ENCODE measurements at regions of chr20 and their contacts with region 1.

Region 1: GRCh38 chr20:51541189-51542032 is 1.1 kb downstream of the NFATC2 start:
- DNase-seq: peak; percentile 90
- ATAC-seq: peak; percentile 84
- H3K4me3 Mint-ChIP-seq: peak overlapping the region; percentile 97
- H3K27ac Mint-ChIP-seq: peak overlapping the region; percentile 99
- H3K4me1 Mint-ChIP-seq: peaks cover 43% of the 10 kb centered on the region
- H3K27me3 Mint-ChIP-seq: peaks cover 8% of the 10 kb centered on the region

Region 2: GRCh38 chr20:51385646-51386530 is 155.5 kb before region 1 on chr20:
- CTCF ChIA-PET with region 1: interaction called, 6 read pairs
- POLR2A ChIA-PET with region 1: no interaction called
- intact Hi-C with region 1: loop called in 1 of 2 experiments (anchors 1 kb)
- DNase-seq: peak; percentile 48
- ATAC-seq: no peak
- H3K4me3 Mint-ChIP-seq: no peak overlapping the region
- H3K27ac Mint-ChIP-seq: no peak overlapping the region
- H3K4me1 Mint-ChIP-seq: peaks cover 64% of the 10 kb centered on the region
- H3K27me3 Mint-ChIP-seq: no peaks in the 10 kb centered on the region

Region 3: DNA sequence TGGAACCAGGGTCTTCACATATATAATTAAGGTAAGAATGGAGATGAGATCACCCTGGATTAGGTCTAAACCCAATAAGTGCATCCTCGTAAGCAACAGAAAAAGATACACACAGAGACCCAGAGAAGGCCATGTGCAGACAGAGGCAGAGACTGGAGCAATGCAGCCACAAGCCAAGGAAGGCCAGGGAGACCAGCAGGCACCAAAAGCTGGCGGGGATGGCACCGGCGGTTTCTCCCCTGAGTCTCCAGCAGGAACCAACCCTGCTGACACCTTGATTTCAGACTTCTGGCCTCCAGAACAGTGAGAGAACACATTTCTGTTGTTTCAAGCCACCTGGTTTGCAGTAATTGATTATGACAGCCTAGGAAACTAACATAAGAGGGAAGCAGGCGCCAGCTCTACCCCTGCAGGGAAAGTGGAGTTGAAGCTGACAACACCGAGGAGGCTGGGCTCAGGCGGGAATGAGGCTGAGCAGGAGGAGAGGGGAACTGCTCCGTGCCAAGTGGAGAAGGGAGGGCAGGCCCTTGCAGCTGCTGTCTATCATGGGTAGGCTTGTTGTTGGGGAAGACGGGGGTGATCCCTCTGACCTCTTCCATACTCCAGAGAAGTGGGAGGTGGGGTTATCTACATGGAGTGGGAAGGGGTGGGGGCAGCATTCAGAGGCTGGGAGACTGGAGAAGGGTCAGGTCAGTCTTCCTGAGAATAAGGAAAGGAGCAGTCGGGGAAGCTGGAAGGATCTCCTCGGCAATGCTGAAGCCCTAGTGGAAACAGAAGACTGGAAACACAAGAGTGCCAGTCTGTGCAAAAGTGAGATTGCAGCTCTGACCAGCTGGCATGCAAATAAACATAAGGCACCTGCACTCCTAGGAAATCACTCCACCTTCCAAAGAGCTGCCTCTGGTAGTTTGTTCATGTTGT is 71.6 kb before region 1 on chr20:
- CTCF ChIA-PET with region 1: interaction called, 7 read pairs
- POLR2A ChIA-PET with region 1: interaction called, 9 read pairs
- intact Hi-C with region 1: loop called in 1 of 2 experiments (anchors 1 kb)
- DNase-seq: peak; percentile 3
- ATAC-seq: no peak
- H3K4me3 Mint-ChIP-seq: no peak overlapping the region
- H3K27ac Mint-ChIP-seq: peak overlapping the region; percentile 95
- H3K4me1 Mint-ChIP-seq: peaks cover 57% of the 10 kb centered on the region
- H3K27me3 Mint-ChIP-seq: no peaks in the 10 kb centered on the region

Region 4: GRCh38 chr20:51525241-51526129 is 15.9 kb before region 1 on chr20:
- CTCF ChIA-PET with region 1: interaction called, 6 read pairs
- POLR2A ChIA-PET with region 1: interaction called, 59 read pairs
- intact Hi-C with region 1: no loop called
- DNase-seq: peak; percentile 72
- ATAC-seq: peak; percentile 42
- H3K4me3 Mint-ChIP-seq: peak overlapping the region; percentile 69
- H3K27ac Mint-ChIP-seq: peak overlapping the region; percentile 93
- H3K4me1 Mint-ChIP-seq: peaks cover 83% of the 10 kb centered on the region
- H3K27me3 Mint-ChIP-seq: no peaks in the 10 kb centered on the region

Region 5: GRCh38 chr20:51595058-51595532 is 53.7 kb after region 1 on chr20:
- CTCF ChIA-PET with region 1: interaction called, 7 read pairs
- POLR2A ChIA-PET with region 1: interaction called, 5 read pairs
- intact Hi-C with region 1: loop called (anchors 1 to 2 kb)
- DNase-seq: peak; percentile 89
- ATAC-seq: peak; percentile 93
- H3K4me3 Mint-ChIP-seq: no peak overlapping the region
- H3K27ac Mint-ChIP-seq: peak overlapping the region; percentile 72
- H3K4me1 Mint-ChIP-seq: peaks cover 54% of the 10 kb centered on the region
- H3K27me3 Mint-ChIP-seq: no peaks in the 10 kb centered on the region

Region 6: DNA sequence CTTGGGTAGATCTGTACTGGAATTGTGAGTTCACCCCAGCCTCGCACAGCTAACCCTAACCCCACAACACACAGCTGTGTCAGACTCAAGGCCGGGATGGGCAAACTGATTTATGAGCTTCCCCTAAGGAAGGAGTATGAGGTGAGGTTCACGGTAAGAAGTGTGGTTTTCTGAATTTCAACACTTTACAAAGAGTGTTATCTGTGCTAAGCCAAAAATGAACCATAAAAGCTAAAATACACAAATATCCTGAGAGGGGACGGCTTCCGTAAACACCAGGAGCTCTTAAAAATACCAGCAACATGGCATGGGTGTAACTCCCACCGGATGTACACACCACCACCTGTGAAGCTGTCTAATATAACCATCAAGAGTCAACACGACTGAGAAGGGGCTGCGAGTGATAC is 125.6 kb after region 1 on chr20:
- CTCF ChIA-PET with region 1: no interaction called
- POLR2A ChIA-PET with region 1: no interaction called
- intact Hi-C with region 1: no loop called
- DNase-seq: no peak
- ATAC-seq: no peak
- H3K4me3 Mint-ChIP-seq: no peak overlapping the region
- H3K27ac Mint-ChIP-seq: no peak overlapping the region
- H3K4me1 Mint-ChIP-seq: peaks cover 11% of the 10 kb centered on the region
- H3K27me3 Mint-ChIP-seq: peaks cover 9% of the 10 kb centered on the region

Measured in activated CD4-positive, alpha-beta T cell treated with anti-CD3 and anti-CD28 coated beads for 36 hours (primary cell).